ENCODE measurements at regions of chr6 and their contacts with region 1.

Region 1: DNA sequence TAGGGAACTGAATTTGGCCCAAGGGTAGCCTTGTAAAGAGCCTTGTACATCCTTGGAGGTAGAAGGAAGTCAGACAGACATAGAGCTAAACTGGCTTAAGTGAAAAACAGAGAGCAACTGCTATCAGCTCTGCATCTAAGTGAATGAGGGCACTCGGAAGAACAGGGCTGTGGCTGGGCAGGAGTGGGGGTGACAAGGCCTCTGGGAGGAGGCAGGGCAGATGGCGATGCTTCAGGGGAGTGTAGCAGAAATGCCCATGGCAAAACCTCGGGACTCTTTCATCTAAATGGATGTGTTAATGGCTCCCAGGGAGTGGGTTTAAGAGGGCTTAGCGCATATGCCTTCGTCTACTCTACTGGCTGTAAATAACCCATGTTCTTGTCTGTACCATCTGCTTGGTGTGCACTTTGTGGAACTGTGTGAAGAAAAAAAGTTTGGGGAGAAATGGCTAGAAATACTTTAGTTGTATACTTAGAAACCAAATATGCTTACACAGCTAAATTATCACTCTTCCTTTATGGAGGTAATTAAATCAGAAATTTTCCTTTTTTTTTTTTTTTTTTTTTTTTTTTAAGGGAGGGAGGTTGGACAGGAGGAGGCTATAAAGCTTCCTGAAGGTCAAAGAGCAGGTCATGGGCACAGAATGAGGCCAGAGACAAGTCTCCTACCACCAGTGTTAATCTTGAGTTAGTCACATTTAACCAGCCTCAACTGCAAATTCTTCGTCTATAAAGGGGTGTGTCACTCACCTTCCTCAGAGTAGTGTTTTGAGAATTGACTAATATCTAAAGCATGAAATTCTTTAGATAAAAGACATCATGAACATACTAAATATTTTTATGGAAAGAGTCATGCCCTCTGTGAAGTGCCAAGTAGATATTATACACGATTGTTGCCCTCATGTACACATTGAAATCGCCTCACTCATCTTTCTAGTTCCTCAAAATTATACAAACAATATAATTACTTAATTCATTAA is 60.9 kb downstream of the FYN start:
- DNase-seq: peak; percentile 70
- H3K4me3 Mint-ChIP-seq: peak overlapping the region; percentile 78
- H3K27ac Mint-ChIP-seq: peak overlapping the region; percentile 93
- H3K4me1 Mint-ChIP-seq: peaks cover 67% of the 10 kb centered on the region
- H3K27me3 Mint-ChIP-seq: no peaks in the 10 kb centered on the region

Region 2: GRCh38 chr6:111737065-111737521 is 75.3 kb before region 1 on chr6:
- intact Hi-C with region 1: no loop called
- DNase-seq: no peak
- H3K4me3 Mint-ChIP-seq: peak overlapping the region; percentile 36
- H3K27ac Mint-ChIP-seq: peak overlapping the region; percentile 74
- H3K4me1 Mint-ChIP-seq: peaks cover 71% of the 10 kb centered on the region
- H3K27me3 Mint-ChIP-seq: no peaks in the 10 kb centered on the region

Region 3: GRCh38 chr6:111823831-111824607 is 11.7 kb after region 1 on chr6:
- intact Hi-C with region 1: loop called (anchors 1 kb)
- DNase-seq: peak; percentile 71
- H3K4me3 Mint-ChIP-seq: peak overlapping the region; percentile 67
- H3K27ac Mint-ChIP-seq: peak overlapping the region; percentile 91
- H3K4me1 Mint-ChIP-seq: peaks cover 70% of the 10 kb centered on the region
- H3K27me3 Mint-ChIP-seq: no peaks in the 10 kb centered on the region

Measured in activated CD4-positive, alpha-beta T cell treated with anti-CD3 and anti-CD28 coated beads, Interleukin-2, amount 10 ng/mL, durations not matched to agents 24 days and 14 days (primary cell).